ENCODE measurements at regions of chr5 and their contacts with region 1.

Region 1: GRCh38 chr5:132464156-132464971 is 26.2 kb downstream of the IRF1 start:
- DNase-seq: no peak
- ATAC-seq: peak in 1 of 4 donors; percentile 10
- H3K4me3 ChIP-seq: peak overlapping the region in 6 of 12 donors; percentile 0 to 40 (median 15)
- H3K27ac ChIP-seq: peak overlapping the region in 11 of 12 donors; percentile 31 to 92 (median 61)
- H3K4me1 ChIP-seq: peaks cover 12 to 99% (median 63%) of the 10 kb centered on the region in 12 donors
- H3K27me3 ChIP-seq: no peaks in the 10 kb centered on the region
- CTCF ChIP-seq: peak in 6 of 12 donors; percentile 10 to 46 (median 24)
- POLR2A ChIP-seq: no peak

Region 2: DNA sequence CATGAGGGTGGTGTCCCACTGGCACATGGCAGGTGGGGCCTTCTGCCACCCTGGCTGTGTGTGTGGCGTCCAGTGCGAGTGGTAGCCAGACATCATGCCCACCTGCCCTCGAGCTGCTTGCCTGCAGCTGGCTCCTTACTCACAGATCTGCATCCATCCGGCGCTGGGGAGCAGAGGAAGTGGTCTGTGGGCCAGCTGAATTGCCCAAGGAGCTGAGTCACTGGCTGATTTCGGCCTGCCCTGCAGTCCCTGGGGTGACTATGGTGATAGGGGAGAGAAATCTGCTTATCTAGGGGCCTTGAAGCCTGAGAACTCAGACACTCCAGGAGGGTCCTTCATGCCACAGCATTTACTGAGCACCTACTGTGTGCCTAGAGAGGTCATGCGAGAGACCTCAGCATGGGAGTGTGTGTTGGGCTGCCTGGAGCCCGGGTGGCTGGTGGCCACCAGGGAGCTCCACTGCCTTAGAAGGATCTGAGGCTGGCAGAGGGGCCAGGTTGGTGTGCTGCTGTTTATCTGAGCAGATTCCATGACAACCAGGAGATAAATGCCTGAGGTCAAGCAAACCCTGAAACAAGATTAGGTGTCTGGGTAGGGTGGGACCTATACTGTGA is 37.7 kb before region 1 on chr5:
- intact Hi-C with region 1: loop called in 1 of 10 experiments (anchors 5 kb)
- DNase-seq: peak; percentile 51 to 88 (median 82)
- ATAC-seq: peak in 3 of 4 donors; percentile 56 to 74 (median 71)
- H3K4me3 ChIP-seq: peak overlapping the region in 1 of 12 donors; percentile 27
- H3K27ac ChIP-seq: peak overlapping the region; percentile 22 to 98 (median 81)
- H3K4me1 ChIP-seq: peaks cover 35 to 100% (median 90%) of the 10 kb centered on the region in 12 donors
- H3K27me3 ChIP-seq: no peaks in the 10 kb centered on the region
- CTCF ChIP-seq: peak in 7 of 12 donors; percentile 15 to 47 (median 28)
- POLR2A ChIP-seq: no peak

Region 3: DNA sequence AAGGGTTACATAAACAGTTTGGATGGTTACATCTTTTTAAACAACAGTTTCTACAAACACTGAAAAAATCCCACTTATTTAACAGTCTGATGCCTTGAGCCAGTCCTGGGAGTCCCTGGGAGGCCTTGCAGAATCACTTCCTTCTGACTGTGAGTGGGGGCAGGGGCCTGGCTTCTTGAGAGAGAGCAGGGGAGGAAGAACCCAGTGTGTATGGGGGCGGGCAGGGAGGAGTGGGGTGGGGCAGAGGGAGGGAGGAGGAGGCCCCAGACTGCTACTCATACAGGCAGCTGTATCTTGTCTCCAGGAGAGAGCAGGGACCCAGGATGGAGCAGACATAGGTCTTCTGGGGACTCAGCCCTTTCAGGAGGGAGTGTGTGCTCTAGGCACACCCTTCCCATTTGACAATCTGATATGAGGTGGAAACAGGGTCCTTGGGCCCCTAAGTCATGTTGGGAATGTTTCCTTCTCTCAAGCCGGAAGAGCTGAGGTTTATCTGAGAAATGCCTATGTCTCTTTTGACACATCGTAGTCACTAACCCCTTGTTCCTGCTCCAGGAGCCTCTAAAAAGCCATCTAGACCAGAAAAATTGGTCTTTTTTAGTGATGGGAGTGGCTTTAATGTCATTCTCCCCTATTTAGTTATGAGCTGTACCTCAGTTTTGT is 26.6 kb before region 1 on chr5:
- intact Hi-C with region 1: loop called in 1 of 10 experiments (anchors 2 kb)
- DNase-seq: peak; percentile 86 to 89 (median 87)
- ATAC-seq: peak; percentile 43 to 81 (median 73)
- H3K4me3 ChIP-seq: no peak overlapping the region
- H3K27ac ChIP-seq: peak overlapping the region; percentile 7 to 89 (median 76)
- H3K4me1 ChIP-seq: peaks cover 19 to 97% (median 83%) of the 10 kb centered on the region in 12 donors
- H3K27me3 ChIP-seq: no peaks in the 10 kb centered on the region
- CTCF ChIP-seq: no peak
- POLR2A ChIP-seq: no peak

Measured in heart left ventricle (tissue), 16 donors.